ENCODE measurements at regions of chr1 and their contacts with region 1.

Region 1: DNA sequence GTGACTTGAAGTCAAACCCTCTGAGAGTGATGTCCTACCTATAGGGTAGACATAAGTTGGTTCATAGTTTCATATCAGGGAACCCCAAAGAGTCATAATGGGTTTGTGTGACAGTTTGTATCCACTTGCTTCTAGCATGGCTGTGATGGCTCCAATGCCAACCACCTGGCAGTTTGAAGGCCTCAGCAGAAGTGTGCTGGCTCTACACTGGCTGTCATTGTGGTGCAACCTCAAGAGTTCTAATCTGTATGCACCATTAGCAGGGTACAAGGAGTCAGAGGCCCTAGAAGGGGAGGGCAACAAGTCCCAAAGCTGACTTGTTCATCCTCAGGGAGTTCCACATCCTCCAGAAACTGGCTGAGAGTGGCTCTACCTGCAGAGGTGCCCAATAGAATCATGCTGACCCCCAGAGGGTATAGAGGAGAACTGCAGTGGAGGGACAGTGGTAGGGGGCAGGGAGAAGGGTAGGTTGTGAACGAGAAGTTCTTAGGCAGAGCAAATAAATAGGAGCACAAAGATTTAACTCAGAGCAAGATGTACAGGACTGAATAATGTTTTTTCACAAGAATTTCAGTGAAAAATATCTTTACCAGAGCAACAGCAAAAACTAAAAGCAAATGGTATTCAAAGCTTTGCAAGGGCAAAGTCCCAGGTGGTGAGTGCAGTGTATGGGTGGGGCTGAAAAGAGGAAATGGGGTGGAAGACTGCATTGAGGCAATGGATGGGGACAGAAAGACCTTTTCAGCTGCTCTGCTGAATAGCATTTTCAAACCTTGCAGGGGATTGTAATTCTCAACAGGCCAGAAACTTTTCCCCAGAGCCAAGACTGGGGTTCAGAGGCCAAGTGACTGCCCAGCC is 3.2 kb downstream of the FCRL2 start:
- DNase-seq: peak; percentile 88
- H3K4me3 ChIP-seq: peak overlapping the region; percentile 43
- H3K27ac ChIP-seq: peak overlapping the region; percentile 68
- H3K4me1 ChIP-seq: peaks cover 63% of the 10 kb centered on the region
- CTCF ChIP-seq: peak; percentile 99

Region 2: DNA sequence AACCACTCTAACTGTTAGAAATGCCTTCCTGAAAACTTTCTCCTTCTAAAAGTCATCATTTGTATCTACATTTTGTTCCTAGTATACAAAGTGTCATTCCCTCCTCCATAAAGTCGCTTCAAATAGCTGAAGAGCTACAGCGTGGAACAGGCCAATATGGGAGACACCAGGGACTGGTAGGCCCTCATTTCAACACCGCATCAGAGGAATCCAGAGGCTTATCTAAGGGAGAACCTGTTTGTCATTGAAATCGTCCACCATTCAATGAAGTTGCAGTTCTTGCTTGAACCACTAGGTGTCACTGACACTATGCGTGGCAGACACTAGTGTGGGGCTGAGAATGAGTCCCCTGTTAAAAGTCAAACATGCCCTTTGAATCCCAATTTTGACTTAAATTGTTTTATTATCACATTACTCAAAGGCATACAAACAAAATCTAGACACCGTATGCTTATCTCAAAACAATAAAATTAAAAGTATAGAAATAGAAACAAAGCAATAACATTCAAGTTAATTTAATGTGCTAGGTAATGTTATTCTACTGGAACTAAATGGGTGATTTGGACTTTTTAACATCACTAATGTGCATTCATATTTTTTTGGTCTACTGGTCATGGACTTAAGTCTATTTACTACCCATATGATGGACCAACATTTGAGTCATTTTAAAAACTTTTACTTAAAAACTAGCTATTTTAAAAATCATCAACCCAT is 403.8 kb before region 1 on chr1:
- CTCF ChIA-PET with region 1: no interaction called
- POLR2A ChIA-PET with region 1: no interaction called
- intact Hi-C with region 1: loop called (anchors 10 kb)
- DNase-seq: peak; percentile 71
- H3K4me3 ChIP-seq: no peak overlapping the region
- H3K27ac ChIP-seq: no peak overlapping the region
- H3K4me1 ChIP-seq: no peaks in the 10 kb centered on the region
- CTCF ChIP-seq: peak; percentile 93

Region 3: GRCh38 chr1:157512036-157512969 is 261.4 kb before region 1 on chr1:
- CTCF ChIA-PET with region 1: no interaction called
- POLR2A ChIA-PET with region 1: interaction called, 4 read pairs
- intact Hi-C with region 1: loop called (anchors 5 kb)
- DNase-seq: peak; percentile 92
- H3K4me3 ChIP-seq: peak overlapping the region; percentile 49
- H3K27ac ChIP-seq: peak overlapping the region; percentile 99
- H3K4me1 ChIP-seq: peaks cover 76% of the 10 kb centered on the region
- CTCF ChIP-seq: no peak

Region 4: DNA sequence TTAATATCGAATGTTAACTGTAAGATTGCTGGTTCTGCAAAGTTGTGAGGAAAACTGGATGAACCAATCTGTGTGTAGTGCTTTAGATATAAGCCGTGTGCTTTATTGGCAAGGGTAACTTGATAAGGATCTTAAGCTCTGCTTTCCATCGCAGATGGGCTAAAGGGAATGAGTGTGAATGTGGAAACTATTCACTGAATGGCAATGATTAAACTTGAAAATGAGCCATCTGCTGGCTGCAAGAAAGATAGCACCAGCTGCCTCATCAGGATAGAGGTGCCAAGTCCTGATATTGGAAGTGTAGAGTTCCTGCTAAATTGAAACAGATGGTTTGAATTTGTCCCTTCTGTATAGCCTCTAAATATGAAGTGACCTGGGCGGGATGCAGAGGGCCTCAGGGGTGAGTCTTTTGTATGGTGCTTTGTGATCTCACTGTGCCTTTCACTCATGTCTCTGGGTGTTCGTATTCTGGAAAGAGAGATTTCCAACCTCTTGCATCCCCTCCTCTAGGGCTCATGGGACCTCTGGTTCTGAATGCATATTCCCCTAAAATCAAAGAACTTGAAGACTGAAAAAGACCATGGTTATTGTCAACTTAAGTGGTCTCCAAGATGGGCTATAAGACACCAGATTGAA is 82.3 kb before region 1 on chr1:
- CTCF ChIA-PET with region 1: no interaction called
- POLR2A ChIA-PET with region 1: no interaction called
- intact Hi-C with region 1: loop called (anchors 1 kb)
- DNase-seq: peak; percentile 67
- H3K4me3 ChIP-seq: no peak overlapping the region
- H3K27ac ChIP-seq: no peak overlapping the region
- H3K4me1 ChIP-seq: peaks cover 21% of the 10 kb centered on the region
- CTCF ChIP-seq: peak; percentile 93

Region 5: GRCh38 chr1:157751283-157751682 is 22.4 kb before region 1 on chr1:
- CTCF ChIA-PET with region 1: no interaction called
- POLR2A ChIA-PET with region 1: no interaction called
- intact Hi-C with region 1: no loop called
- DNase-seq: no peak
- H3K4me3 ChIP-seq: no peak overlapping the region
- H3K27ac ChIP-seq: no peak overlapping the region
- H3K4me1 ChIP-seq: peaks cover 4% of the 10 kb centered on the region
- CTCF ChIP-seq: peak; percentile 47

Region 6: GRCh38 chr1:157849229-157849875 is 75.6 kb after region 1 on chr1:
- CTCF ChIA-PET with region 1: no interaction called
- POLR2A ChIA-PET with region 1: interaction called, 4 read pairs
- intact Hi-C with region 1: loop called (anchors 2 kb)
- DNase-seq: peak; percentile 87
- H3K4me3 ChIP-seq: peak overlapping the region; percentile 56
- H3K27ac ChIP-seq: peak overlapping the region; percentile 90
- H3K4me1 ChIP-seq: peaks cover 63% of the 10 kb centered on the region
- CTCF ChIP-seq: no peak; the same call in 1 of the 2 replicates

Region 7: GRCh38 chr1:157948312-157949073 is 174.8 kb after region 1 on chr1:
- CTCF ChIA-PET with region 1: no interaction called
- POLR2A ChIA-PET with region 1: no interaction called
- intact Hi-C with region 1: loop called (anchors 1 kb)
- DNase-seq: peak; percentile 84
- H3K4me3 ChIP-seq: no peak overlapping the region
- H3K27ac ChIP-seq: no peak overlapping the region
- H3K4me1 ChIP-seq: peaks cover 23% of the 10 kb centered on the region
- CTCF ChIP-seq: peak; percentile 90

Region 8: DNA sequence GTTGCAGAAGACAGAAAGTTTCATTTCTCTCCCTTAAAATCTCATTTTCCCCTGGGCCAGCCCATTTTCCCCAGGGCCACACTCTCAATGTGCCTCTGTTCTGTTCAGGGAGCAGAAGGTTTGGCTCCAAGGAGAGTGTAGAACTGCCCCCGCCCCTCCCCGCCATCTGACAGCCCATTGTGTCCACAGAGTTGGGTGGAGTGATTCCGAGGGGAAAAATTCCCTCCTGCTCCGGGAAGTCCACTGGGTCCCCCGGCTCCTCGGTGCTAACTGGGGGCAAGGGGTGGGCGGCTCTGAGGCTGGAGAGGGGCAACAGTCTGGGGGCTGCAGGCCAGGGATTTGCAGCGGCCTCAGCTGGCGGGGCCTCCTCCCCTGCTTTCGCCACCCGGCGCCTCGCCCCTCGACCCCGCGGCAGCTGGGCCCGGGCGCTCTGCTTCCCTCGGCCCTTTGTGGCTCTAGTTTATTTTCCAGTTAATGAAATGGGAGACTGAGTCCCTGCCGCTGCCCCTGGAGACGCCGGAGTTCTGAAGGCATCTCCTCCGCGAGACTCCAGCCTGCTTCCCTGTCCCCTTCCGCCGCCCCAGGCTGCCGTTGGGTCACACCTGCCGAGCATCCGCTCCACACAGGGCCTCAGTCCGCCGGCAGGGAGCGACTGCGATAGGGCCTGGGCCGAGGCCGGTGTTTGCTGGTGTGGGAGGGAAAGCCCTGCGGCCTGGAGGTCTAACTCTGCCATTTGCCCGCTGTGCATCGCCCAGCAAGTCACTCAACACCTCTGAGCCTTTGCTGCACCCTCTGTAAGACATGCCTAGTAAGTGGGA is 205.1 kb after region 1 on chr1:
- CTCF ChIA-PET with region 1: no interaction called
- POLR2A ChIA-PET with region 1: no interaction called
- intact Hi-C with region 1: no loop called
- DNase-seq: no peak
- H3K4me3 ChIP-seq: no peak overlapping the region
- H3K27ac ChIP-seq: no peak overlapping the region
- H3K4me1 ChIP-seq: no peaks in the 10 kb centered on the region
- CTCF ChIP-seq: no peak